CD8-positive, alpha-beta T cell (primary cell): ENCODE measurements at regions of chr2 and their contacts with region 1.

Region 1: GRCh38 chr2:73176881-73177644 is 25.3 kb upstream of the NOTO start:
- DNase-seq: peak; percentile 80 to 94 (median 91)
- ATAC-seq: peak; percentile 92
- H3K4me3 ChIP-seq: peak overlapping the region; percentile 65
- H3K4me3 Mint-ChIP-seq: peak overlapping the region; percentile 89
- H3K27ac ChIP-seq: no peak overlapping the region
- H3K27ac Mint-ChIP-seq: no peak overlapping the region
- H3K4me1 ChIP-seq: peaks cover 26% of the 10 kb centered on the region
- H3K4me1 Mint-ChIP-seq: peaks cover 14% of the 10 kb centered on the region
- H3K27me3 ChIP-seq: peaks cover 6 to 11% of the 10 kb centered on the region in 2 experiments
- H3K27me3 Mint-ChIP-seq: peaks cover 20% of the 10 kb centered on the region
- CTCF ChIP-seq: peak; percentile 92

Region 2: DNA sequence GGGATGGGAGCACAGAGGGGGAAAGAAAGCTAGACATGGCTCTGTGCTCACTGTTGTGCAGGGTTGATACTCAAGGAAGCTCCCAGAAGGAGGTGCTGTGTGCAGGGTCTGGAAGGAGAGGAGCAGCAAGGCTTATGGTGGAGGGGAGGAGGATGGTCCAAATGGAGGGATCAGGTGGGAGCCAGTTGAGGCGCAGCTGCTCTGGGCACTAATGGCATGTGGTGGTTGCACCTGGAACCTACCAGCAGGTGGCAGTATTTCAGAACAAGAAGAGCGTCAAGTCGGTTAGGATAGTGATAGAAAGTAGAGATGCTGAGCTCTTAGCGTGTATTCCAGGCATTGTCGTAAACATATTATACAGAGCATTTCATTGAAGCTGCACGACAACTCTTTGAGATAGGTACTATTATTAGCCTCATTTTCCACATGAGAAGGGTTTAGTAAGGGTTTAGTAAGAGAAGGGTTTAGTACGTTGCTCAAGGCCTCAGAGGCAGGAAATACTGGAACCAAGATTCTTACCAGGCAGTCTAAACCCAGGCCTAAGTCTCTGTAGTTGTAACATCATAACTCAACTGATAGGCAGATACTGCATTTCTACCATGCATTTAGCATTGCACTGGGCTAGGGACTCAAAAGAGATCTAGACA is 1253.1 kb before region 1 on chr2:
- CTCF ChIA-PET with region 1: no interaction called
- POLR2A ChIA-PET with region 1: no interaction called
- intact Hi-C with region 1: loop called in 1 of 2 experiments (anchors 10 kb)
- DNase-seq: peak in 7 of 9 experiments; percentile 11 to 68 (median 48)
- ATAC-seq: no peak
- H3K4me3 ChIP-seq: no peak overlapping the region
- H3K4me3 Mint-ChIP-seq: no peak overlapping the region
- H3K27ac ChIP-seq: no peak overlapping the region
- H3K27ac Mint-ChIP-seq: no peak overlapping the region
- H3K4me1 ChIP-seq: no peaks in the 10 kb centered on the region
- H3K4me1 Mint-ChIP-seq: no peaks in the 10 kb centered on the region
- H3K27me3 ChIP-seq: no peaks in the 10 kb centered on the region
- H3K27me3 Mint-ChIP-seq: peaks cover 2% of the 10 kb centered on the region
- CTCF ChIP-seq: peak; percentile 67

Region 3: DNA sequence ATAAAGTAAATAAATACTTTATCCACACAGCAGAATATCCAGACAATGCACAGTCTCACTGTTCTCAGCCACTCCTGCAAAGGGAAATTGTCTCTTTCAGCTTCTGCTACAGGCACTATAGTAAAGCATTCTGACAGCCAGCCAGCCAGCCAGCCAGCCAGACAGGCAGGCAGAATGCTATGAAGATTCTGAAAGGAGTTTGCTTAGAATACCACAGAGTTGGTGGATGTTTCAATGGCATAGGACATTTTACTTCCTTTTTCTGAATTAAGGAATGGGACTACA is 913.3 kb before region 1 on chr2:
- CTCF ChIA-PET with region 1: no interaction called
- POLR2A ChIA-PET with region 1: no interaction called
- intact Hi-C with region 1: no loop called
- DNase-seq: no peak
- ATAC-seq: no peak
- H3K4me3 ChIP-seq: no peak overlapping the region
- H3K4me3 Mint-ChIP-seq: no peak overlapping the region
- H3K27ac ChIP-seq: no peak overlapping the region
- H3K27ac Mint-ChIP-seq: no peak overlapping the region
- H3K4me1 ChIP-seq: no peaks in the 10 kb centered on the region
- H3K4me1 Mint-ChIP-seq: no peaks in the 10 kb centered on the region
- H3K27me3 ChIP-seq: no peaks in the 10 kb centered on the region
- H3K27me3 Mint-ChIP-seq: no peaks in the 10 kb centered on the region
- CTCF ChIP-seq: no peak

Region 4: DNA sequence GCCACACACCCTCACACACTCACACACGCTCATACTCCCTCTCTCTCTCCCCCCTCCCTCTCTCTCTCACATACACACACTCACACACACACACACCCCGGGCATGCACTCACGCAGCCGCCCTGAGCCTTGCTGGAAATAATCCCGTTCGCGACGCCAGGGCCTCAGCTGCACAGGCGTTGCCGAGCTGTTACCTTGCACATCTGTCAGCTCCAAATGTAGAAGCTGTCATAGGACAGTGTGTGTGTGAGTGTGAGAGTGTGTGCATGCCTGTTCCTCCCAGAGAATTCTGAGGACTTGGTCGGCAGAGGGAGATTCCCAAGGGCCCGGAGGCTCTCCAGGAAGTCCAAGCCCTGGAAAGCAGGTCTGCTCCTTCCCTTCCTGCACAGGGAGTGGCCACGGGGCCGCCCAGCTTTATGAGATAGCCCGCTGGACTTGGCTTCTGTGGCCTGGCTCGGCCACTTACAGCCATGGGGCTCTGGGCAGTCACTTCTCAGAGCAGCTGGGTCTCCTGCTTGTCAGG is 281.2 kb before region 1 on chr2:
- CTCF ChIA-PET with region 1: interaction called, 35 read pairs
- POLR2A ChIA-PET with region 1: no interaction called
- intact Hi-C with region 1: loop called (anchors 2 to 5 kb)
- DNase-seq: no peak
- ATAC-seq: no peak
- H3K4me3 ChIP-seq: no peak overlapping the region
- H3K4me3 Mint-ChIP-seq: no peak overlapping the region
- H3K27ac ChIP-seq: no peak overlapping the region
- H3K27ac Mint-ChIP-seq: no peak overlapping the region
- H3K4me1 ChIP-seq: no peaks in the 10 kb centered on the region
- H3K4me1 Mint-ChIP-seq: peaks cover 2% of the 10 kb centered on the region
- H3K27me3 ChIP-seq: peaks cover 2 to 7% of the 10 kb centered on the region in 2 experiments
- H3K27me3 Mint-ChIP-seq: peaks cover 53% of the 10 kb centered on the region
- CTCF ChIP-seq: no peak

Region 5: GRCh38 chr2:73080711-73081131 is 96.3 kb before region 1 on chr2:
- CTCF ChIA-PET with region 1: interaction called, 106 read pairs
- POLR2A ChIA-PET with region 1: no interaction called
- intact Hi-C with region 1: loop called (anchors 1 kb)
- DNase-seq: no peak
- ATAC-seq: no peak
- H3K4me3 ChIP-seq: no peak overlapping the region
- H3K4me3 Mint-ChIP-seq: no peak overlapping the region
- H3K27ac ChIP-seq: no peak overlapping the region
- H3K27ac Mint-ChIP-seq: no peak overlapping the region
- H3K4me1 ChIP-seq: no peaks in the 10 kb centered on the region
- H3K4me1 Mint-ChIP-seq: no peaks in the 10 kb centered on the region
- H3K27me3 ChIP-seq: no peaks in the 10 kb centered on the region
- H3K27me3 Mint-ChIP-seq: no peaks in the 10 kb centered on the region
- CTCF ChIP-seq: no peak

Region 6: GRCh38 chr2:73112913-73113633 is 64.0 kb before region 1 on chr2 and contains the start of gene RAB11FIP5:
- CTCF ChIA-PET with region 1: interaction called, 6 read pairs
- POLR2A ChIA-PET with region 1: no interaction called
- intact Hi-C with region 1: loop called (anchors 2 kb)
- DNase-seq: peak; percentile 43 to 90 (median 73)
- ATAC-seq: peak; percentile 90
- H3K4me3 ChIP-seq: peak within 1 kb of the TSS; percentile 68 to 70
- H3K4me3 Mint-ChIP-seq: peak within 1 kb of the TSS; percentile 82
- H3K27ac ChIP-seq: peak within 1 kb of the TSS; percentile 32 to 37
- H3K27ac Mint-ChIP-seq: no peak within 1 kb of the TSS
- H3K4me1 ChIP-seq: peaks cover 15% of the 10 kb centered on the region
- H3K4me1 Mint-ChIP-seq: peaks cover 18% of the 10 kb centered on the region
- H3K27me3 ChIP-seq: peaks cover 0 to 3% of the 10 kb centered on the region in 2 experiments
- H3K27me3 Mint-ChIP-seq: no peaks in the 10 kb centered on the region
- CTCF ChIP-seq: no peak
- total RNA-seq, gene RAB11FIP5: 4.7 to 10.7 TPM

Region 7: GRCh38 chr2:73187549-73187948 is 10.5 kb after region 1 on chr2:
- CTCF ChIA-PET with region 1: interaction called, 12 read pairs
- POLR2A ChIA-PET with region 1: no interaction called
- intact Hi-C with region 1: no loop called
- DNase-seq: no peak
- ATAC-seq: no peak
- H3K4me3 ChIP-seq: no peak overlapping the region
- H3K4me3 Mint-ChIP-seq: no peak overlapping the region
- H3K27ac ChIP-seq: no peak overlapping the region
- H3K27ac Mint-ChIP-seq: no peak overlapping the region
- H3K4me1 ChIP-seq: no peaks in the 10 kb centered on the region
- H3K4me1 Mint-ChIP-seq: no peaks in the 10 kb centered on the region
- H3K27me3 ChIP-seq: peaks cover 0 to 4% of the 10 kb centered on the region in 2 experiments
- H3K27me3 Mint-ChIP-seq: peaks cover 15% of the 10 kb centered on the region
- CTCF ChIP-seq: no peak